Aorta (tissue), 5 donors: ENCODE measurements at regions of chr15 and their contacts with region 1.

Region 1: GRCh38 chr15:31472636-31473384 is 146.2 kb downstream of the KLF13 start:
- DNase-seq: no peak
- ATAC-seq: no peak
- H3K4me3 ChIP-seq: no peak overlapping the region
- H3K27ac ChIP-seq: no peak overlapping the region
- H3K4me1 ChIP-seq: no peaks in the 10 kb centered on the region
- H3K27me3 ChIP-seq: no peaks in the 10 kb centered on the region

Region 2: DNA sequence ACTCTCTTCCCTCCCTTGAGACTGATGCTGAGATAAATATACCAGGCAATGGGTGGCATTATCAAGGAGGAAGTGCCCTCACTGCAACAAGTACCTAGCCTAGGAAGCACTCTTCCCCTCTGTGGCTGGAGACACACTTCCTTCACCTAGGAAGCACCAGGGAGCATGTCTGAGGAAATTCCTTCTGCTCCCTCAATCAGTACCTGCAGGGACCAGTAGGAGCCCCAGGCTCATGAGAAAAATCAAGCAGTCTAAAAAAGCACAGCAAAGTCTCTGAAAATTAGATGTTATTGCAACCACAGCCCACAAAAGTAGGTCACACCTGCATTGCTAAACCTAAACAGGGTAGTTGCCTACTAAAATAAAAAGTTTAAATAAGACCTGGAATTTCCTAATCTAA is 293.1 kb before region 1 on chr15:
- intact Hi-C with region 1: no loop called
- DNase-seq: no peak
- ATAC-seq: no peak
- H3K4me3 ChIP-seq: no peak overlapping the region
- H3K27ac ChIP-seq: no peak overlapping the region
- H3K4me1 ChIP-seq: no peaks in the 10 kb centered on the region
- H3K27me3 ChIP-seq: no peaks in the 10 kb centered on the region

Region 3: GRCh38 chr15:31402511-31403056 is 70.2 kb before region 1 on chr15:
- intact Hi-C with region 1: loop called in 1 of 2 experiments (anchors 10 kb)
- DNase-seq: peak; percentile 83 to 86
- ATAC-seq: peak; percentile 83
- H3K4me3 ChIP-seq: no peak overlapping the region
- H3K27ac ChIP-seq: peak overlapping the region; percentile 3 to 78
- H3K4me1 ChIP-seq: peaks cover 0 to 5% of the 10 kb centered on the region in 2 donors
- H3K27me3 ChIP-seq: no peaks in the 10 kb centered on the region